ENCODE measurements at regions of chr3 and their contacts with region 1.

Region 1: DNA sequence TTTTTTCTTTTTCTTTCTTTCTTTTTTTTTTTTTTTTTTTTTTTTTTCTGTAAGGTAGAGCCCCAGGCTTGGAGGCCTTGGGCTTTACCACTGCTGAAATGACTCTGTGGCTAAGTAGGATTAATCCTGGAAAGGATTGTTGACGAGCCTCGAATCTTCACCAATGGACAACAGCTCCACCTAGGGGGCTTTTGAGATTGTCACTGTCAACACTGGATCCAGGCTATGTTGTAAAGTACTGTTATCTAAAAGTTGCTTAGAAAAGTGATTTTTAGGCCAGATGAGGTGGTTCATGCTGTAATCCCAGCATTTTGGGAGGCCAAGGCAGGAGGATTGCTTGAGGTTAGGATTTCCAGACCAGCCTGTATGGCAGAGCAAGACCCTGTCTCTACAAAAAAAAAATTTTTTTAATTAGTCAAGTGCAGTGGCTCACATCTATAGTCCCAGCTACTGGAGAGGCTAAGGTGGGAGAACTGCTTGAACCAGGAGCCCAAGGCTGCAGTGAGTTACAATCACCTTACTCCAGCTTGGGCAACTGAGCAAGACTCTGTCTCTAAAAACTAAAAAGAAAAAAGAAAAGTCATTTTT is 41.6 kb downstream of the KLHL18 start:
- DNase-seq: peak in 8 of 9 donors; percentile 22 to 58 (median 40)
- ATAC-seq: peak; percentile 72
- H3K4me3 ChIP-seq: no peak overlapping the region
- H3K4me3 Mint-ChIP-seq: no peak overlapping the region
- H3K27ac ChIP-seq: no peak overlapping the region
- H3K27ac Mint-ChIP-seq: no peak overlapping the region
- H3K4me1 ChIP-seq: no peaks in the 10 kb centered on the region
- H3K4me1 Mint-ChIP-seq: peaks cover 0 to 8% (median 0%) of the 10 kb centered on the region in 7 donors
- H3K27me3 ChIP-seq: no peaks in the 10 kb centered on the region
- H3K27me3 Mint-ChIP-seq: no peaks in the 10 kb centered on the region

Region 2: DNA sequence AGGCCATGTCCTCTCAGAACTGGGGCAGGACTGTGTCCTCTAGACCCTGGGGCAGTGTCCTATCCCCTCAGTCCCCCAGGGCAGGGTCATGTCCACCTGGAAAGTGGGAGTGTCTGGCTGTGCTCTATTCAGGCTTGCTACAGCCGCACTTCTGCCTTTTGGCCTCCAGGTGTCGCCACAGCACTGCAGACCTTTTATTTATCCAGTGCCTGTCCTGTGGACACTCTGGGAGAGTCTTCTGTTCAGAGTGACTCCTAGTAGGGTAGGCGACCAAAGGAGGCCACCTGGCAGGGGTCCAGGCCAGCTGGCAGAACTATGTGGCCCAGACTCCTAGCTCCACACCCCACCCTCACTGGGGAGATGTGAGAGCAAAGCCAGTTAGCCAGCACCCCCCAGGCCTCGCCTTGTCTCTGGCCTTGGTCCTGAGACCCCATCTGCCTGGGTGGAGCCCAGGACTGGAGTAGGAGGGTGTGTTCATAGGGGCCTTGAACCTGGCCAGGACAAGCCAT is 619.3 kb before region 1 on chr3:
- CTCF ChIA-PET with region 1: no interaction called
- POLR2A ChIA-PET with region 1: no interaction called
- intact Hi-C with region 1: loop called (anchors 1 kb)
- DNase-seq: peak; percentile 45 to 71 (median 63)
- ATAC-seq: peak; percentile 87
- H3K4me3 ChIP-seq: no peak overlapping the region
- H3K4me3 Mint-ChIP-seq: no peak overlapping the region
- H3K27ac ChIP-seq: no peak overlapping the region
- H3K27ac Mint-ChIP-seq: peak overlapping the region in 1 of 9 donors; percentile 36
- H3K4me1 ChIP-seq: peaks cover 0 to 19% of the 10 kb centered on the region in 2 donors
- H3K4me1 Mint-ChIP-seq: peaks cover 0 to 29% (median 20%) of the 10 kb centered on the region in 7 donors
- H3K27me3 ChIP-seq: no peaks in the 10 kb centered on the region
- H3K27me3 Mint-ChIP-seq: peaks cover 0 to 25% (median 0%) of the 10 kb centered on the region in 5 donors

Region 3: DNA sequence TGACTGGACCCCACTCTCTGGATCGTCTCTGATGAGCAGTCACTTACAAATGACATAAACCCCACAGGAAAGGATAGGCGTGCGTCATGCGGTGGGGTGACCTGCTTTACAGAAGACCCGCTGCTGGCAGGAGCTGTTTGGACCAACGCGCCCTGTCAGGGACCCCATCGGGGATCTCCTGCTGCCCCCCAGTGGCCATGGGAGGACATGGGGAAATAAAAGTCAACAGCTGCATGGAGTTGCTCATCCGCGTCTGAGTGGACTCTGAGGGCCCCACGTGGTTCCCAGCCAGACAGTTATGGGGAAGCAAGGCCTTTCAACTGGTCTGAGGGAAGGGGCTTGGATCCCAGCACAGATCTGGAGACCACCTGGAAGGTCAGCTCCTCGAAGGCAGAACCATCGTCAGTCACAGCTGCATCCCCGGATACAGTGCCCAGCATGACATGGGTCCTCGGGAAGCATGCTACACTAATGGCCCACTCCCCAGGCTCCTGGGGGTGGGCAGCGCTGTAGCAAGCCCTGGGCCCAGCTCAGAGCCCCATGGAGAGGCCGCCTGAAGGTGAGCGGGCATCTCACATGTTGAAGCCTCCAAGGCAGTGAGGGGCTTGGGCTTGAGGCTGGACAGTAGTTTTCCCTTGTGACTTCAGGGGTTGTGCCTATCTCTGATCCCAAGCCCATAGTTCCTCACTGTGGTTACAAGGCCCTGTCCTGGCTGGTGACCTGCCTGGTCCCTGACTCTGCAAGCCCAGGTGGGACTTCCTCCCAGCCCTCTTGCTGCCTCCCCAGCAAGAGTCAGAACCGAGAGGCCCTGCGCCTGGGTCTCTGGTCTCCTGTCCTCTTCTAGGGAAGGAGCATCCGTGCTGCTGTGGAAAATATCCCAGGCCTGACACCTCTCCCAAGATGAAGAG is 414.6 kb before region 1 on chr3:
- CTCF ChIA-PET with region 1: no interaction called
- POLR2A ChIA-PET with region 1: no interaction called
- intact Hi-C with region 1: loop called in 1 of 2 experiments (anchors 10 kb)
- DNase-seq: peak; percentile 42 to 76 (median 64)
- ATAC-seq: peak; percentile 89
- H3K4me3 ChIP-seq: no peak overlapping the region
- H3K4me3 Mint-ChIP-seq: no peak overlapping the region
- H3K27ac ChIP-seq: no peak overlapping the region
- H3K27ac Mint-ChIP-seq: peak overlapping the region in 1 of 9 donors; percentile 6
- H3K4me1 ChIP-seq: peaks cover 11 to 17% of the 10 kb centered on the region in 2 donors
- H3K4me1 Mint-ChIP-seq: peaks cover 8 to 19% (median 17%) of the 10 kb centered on the region in 7 donors
- H3K27me3 ChIP-seq: no peaks in the 10 kb centered on the region
- H3K27me3 Mint-ChIP-seq: no peaks in the 10 kb centered on the region

Region 4: DNA sequence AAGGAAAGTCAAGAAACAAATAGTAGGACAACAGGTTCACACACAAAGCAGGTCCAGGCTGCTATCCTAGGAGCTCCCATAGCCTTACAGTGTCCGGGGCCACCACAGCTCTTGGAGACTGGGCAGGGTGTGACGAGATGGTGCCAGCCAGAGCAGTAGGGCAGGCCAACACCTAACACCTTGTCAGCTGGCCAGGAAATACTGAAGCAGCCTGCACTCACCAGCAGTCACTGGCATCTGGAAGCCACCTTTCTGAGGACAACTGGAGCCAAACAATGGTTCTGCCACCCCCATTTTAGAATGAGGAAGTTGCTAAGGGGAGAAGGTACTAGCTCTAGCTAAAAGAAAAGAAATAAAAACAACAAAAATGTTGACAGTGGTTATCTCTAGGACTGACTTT is 395.0 kb before region 1 on chr3:
- CTCF ChIA-PET with region 1: no interaction called
- POLR2A ChIA-PET with region 1: no interaction called
- intact Hi-C with region 1: no loop called
- DNase-seq: no peak
- ATAC-seq: no peak
- H3K4me3 ChIP-seq: no peak overlapping the region
- H3K4me3 Mint-ChIP-seq: peak overlapping the region in 3 of 10 donors; percentile 8 to 40 (median 15)
- H3K27ac ChIP-seq: no peak overlapping the region
- H3K27ac Mint-ChIP-seq: peak overlapping the region in 8 of 9 donors; percentile 19 to 77 (median 47)
- H3K4me1 ChIP-seq: peaks cover 34 to 64% of the 10 kb centered on the region in 2 donors
- H3K4me1 Mint-ChIP-seq: peaks cover 40 to 75% (median 57%) of the 10 kb centered on the region in 7 donors
- H3K27me3 ChIP-seq: no peaks in the 10 kb centered on the region
- H3K27me3 Mint-ChIP-seq: no peaks in the 10 kb centered on the region

Region 5: GRCh38 chr3:46998121-46998851 is 326.1 kb before region 1 on chr3:
- CTCF ChIA-PET with region 1: no interaction called
- POLR2A ChIA-PET with region 1: no interaction called
- intact Hi-C with region 1: loop called in 1 of 2 experiments (anchors 1 kb)
- DNase-seq: peak; percentile 53 to 84 (median 69)
- ATAC-seq: peak; percentile 85
- H3K4me3 ChIP-seq: no peak overlapping the region
- H3K4me3 Mint-ChIP-seq: no peak overlapping the region
- H3K27ac ChIP-seq: no peak overlapping the region
- H3K27ac Mint-ChIP-seq: peak overlapping the region in 5 of 9 donors; percentile 41 to 79 (median 55)
- H3K4me1 ChIP-seq: peaks cover 0 to 10% of the 10 kb centered on the region in 2 donors
- H3K4me1 Mint-ChIP-seq: peaks cover 7 to 18% (median 11%) of the 10 kb centered on the region in 7 donors
- H3K27me3 ChIP-seq: no peaks in the 10 kb centered on the region
- H3K27me3 Mint-ChIP-seq: no peaks in the 10 kb centered on the region

Region 6: GRCh38 chr3:47089630-47090029 is 234.7 kb before region 1 on chr3:
- CTCF ChIA-PET with region 1: no interaction called
- POLR2A ChIA-PET with region 1: interaction called, 3 read pairs
- intact Hi-C with region 1: loop called in 1 of 2 experiments (anchors 2 kb)
- DNase-seq: no peak
- ATAC-seq: no peak
- H3K4me3 ChIP-seq: no peak overlapping the region
- H3K4me3 Mint-ChIP-seq: no peak overlapping the region
- H3K27ac ChIP-seq: no peak overlapping the region
- H3K27ac Mint-ChIP-seq: peak overlapping the region in 4 of 9 donors; percentile 44 to 61 (median 48)
- H3K4me1 ChIP-seq: no peaks in the 10 kb centered on the region
- H3K4me1 Mint-ChIP-seq: peaks cover 0 to 15% (median 4%) of the 10 kb centered on the region in 7 donors
- H3K27me3 ChIP-seq: no peaks in the 10 kb centered on the region
- H3K27me3 Mint-ChIP-seq: no peaks in the 10 kb centered on the region

Region 7: DNA sequence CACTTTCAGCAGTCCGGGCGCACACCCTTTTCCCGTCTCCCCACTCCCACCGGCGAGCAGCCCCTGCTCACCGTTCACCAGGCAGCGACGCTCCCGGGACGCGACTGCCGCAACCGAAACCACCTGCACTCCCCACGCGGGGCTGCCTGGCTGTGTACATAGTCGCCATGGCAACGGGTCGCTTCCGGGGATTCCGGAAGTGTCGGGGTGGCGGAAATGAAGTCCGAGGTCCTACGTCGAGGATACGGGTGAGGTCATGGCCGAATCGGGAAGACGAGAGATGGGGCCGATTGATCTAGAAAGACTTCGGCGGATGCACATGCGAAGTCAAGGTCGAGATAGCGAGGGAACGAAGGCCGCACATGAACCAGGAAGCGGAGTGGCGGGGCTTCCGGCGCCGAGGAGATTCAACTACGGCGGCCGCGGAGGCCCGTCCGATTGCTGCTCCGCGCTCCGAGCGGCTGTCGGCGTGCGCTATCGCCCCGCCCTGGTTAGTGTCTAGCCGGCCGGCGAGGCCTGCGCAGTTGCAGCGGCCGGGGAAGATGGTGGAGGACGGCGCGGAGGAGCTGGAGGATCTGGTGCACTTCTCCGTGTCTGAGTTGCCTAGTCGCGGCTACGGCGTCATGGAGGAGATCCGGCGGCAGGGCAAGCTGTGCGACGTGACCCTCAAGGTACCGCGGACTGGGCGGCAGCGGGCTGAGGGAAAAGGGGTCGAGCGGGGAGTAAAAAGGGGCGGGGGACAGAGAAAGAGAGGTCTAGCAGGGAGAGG is 41.8 kb before region 1 on chr3 and contains the starts of genes KIF9 and KLHL18:
- CTCF ChIA-PET with region 1: no interaction called
- POLR2A ChIA-PET with region 1: no interaction called
- intact Hi-C with region 1: loop called (anchors 2 kb)
- DNase-seq: peak; percentile 86 to 98 (median 97)
- ATAC-seq: peak; percentile 91
- H3K4me3 ChIP-seq: peak within 1 kb of the TSS; percentile 76
- H3K4me3 Mint-ChIP-seq: peak within 1 kb of the TSS; percentile 89 to 100 (median 98)
- H3K27ac ChIP-seq: peak within 1 kb of the TSS; percentile 93
- H3K27ac Mint-ChIP-seq: peak within 1 kb of the TSS; percentile 98 to 100 (median 99)
- H3K4me1 ChIP-seq: peaks cover 14 to 23% of the 10 kb centered on the region in 2 donors
- H3K4me1 Mint-ChIP-seq: peaks cover 29 to 56% (median 43%) of the 10 kb centered on the region in 7 donors
- H3K27me3 ChIP-seq: no peaks in the 10 kb centered on the region
- H3K27me3 Mint-ChIP-seq: no peaks in the 10 kb centered on the region
- total RNA-seq, gene KIF9: 2.7 to 15.0 (median 4.1) TPM
- total RNA-seq, gene KLHL18: 21.7 to 47.5 (median 24.5) TPM

Region 8: GRCh38 chr3:47433796-47434195 is 109.4 kb after region 1 on chr3:
- CTCF ChIA-PET with region 1: no interaction called
- POLR2A ChIA-PET with region 1: no interaction called
- intact Hi-C with region 1: no loop called
- DNase-seq: no peak
- ATAC-seq: no peak
- H3K4me3 ChIP-seq: no peak overlapping the region
- H3K4me3 Mint-ChIP-seq: no peak overlapping the region
- H3K27ac ChIP-seq: no peak overlapping the region
- H3K27ac Mint-ChIP-seq: peak overlapping the region in 1 of 9 donors; percentile 14
- H3K4me1 ChIP-seq: no peaks in the 10 kb centered on the region
- H3K4me1 Mint-ChIP-seq: peaks cover 0 to 6% (median 0%) of the 10 kb centered on the region in 7 donors
- H3K27me3 ChIP-seq: no peaks in the 10 kb centered on the region
- H3K27me3 Mint-ChIP-seq: no peaks in the 10 kb centered on the region

Region 9: GRCh38 chr3:47849699-47850563 is 525.6 kb after region 1 on chr3:
- CTCF ChIA-PET with region 1: no interaction called
- POLR2A ChIA-PET with region 1: no interaction called
- intact Hi-C with region 1: no loop called
- DNase-seq: no peak
- ATAC-seq: peak; percentile 26
- H3K4me3 ChIP-seq: no peak overlapping the region
- H3K4me3 Mint-ChIP-seq: no peak overlapping the region
- H3K27ac ChIP-seq: no peak overlapping the region
- H3K27ac Mint-ChIP-seq: peak overlapping the region in 6 of 9 donors; percentile 10 to 84 (median 52)
- H3K4me1 ChIP-seq: no peaks in the 10 kb centered on the region
- H3K4me1 Mint-ChIP-seq: peaks cover 0 to 3% (median 0%) of the 10 kb centered on the region in 7 donors
- H3K27me3 ChIP-seq: no peaks in the 10 kb centered on the region
- H3K27me3 Mint-ChIP-seq: no peaks in the 10 kb centered on the region

Region 10: GRCh38 chr3:49028673-49029562 is 1704.5 kb after region 1 on chr3 and contains the start of gene IMPDH2:
- CTCF ChIA-PET with region 1: no interaction called
- POLR2A ChIA-PET with region 1: no interaction called
- intact Hi-C with region 1: no loop called
- DNase-seq: peak; percentile 89 to 95 (median 93)
- ATAC-seq: peak; percentile 97
- H3K4me3 ChIP-seq: peak within 1 kb of the TSS; percentile 74
- H3K4me3 Mint-ChIP-seq: peak within 1 kb of the TSS; percentile 86 to 96 (median 94)
- H3K27ac ChIP-seq: peak within 1 kb of the TSS; percentile 98
- H3K27ac Mint-ChIP-seq: peak within 1 kb of the TSS; percentile 92 to 100 (median 98)
- H3K4me1 ChIP-seq: peaks cover 10 to 11% of the 10 kb centered on the region in 2 donors
- H3K4me1 Mint-ChIP-seq: peaks cover 7 to 52% (median 34%) of the 10 kb centered on the region in 7 donors
- H3K27me3 ChIP-seq: no peaks in the 10 kb centered on the region
- H3K27me3 Mint-ChIP-seq: no peaks in the 10 kb centered on the region
- total RNA-seq, gene IMPDH2: 102 to 206 (median 121) TPM

Measured in naive thymus-derived CD4-positive, alpha-beta T cell (primary cell).